ENCODE measurements at regions of chr12 and their contacts with region 1.

Region 1: DNA sequence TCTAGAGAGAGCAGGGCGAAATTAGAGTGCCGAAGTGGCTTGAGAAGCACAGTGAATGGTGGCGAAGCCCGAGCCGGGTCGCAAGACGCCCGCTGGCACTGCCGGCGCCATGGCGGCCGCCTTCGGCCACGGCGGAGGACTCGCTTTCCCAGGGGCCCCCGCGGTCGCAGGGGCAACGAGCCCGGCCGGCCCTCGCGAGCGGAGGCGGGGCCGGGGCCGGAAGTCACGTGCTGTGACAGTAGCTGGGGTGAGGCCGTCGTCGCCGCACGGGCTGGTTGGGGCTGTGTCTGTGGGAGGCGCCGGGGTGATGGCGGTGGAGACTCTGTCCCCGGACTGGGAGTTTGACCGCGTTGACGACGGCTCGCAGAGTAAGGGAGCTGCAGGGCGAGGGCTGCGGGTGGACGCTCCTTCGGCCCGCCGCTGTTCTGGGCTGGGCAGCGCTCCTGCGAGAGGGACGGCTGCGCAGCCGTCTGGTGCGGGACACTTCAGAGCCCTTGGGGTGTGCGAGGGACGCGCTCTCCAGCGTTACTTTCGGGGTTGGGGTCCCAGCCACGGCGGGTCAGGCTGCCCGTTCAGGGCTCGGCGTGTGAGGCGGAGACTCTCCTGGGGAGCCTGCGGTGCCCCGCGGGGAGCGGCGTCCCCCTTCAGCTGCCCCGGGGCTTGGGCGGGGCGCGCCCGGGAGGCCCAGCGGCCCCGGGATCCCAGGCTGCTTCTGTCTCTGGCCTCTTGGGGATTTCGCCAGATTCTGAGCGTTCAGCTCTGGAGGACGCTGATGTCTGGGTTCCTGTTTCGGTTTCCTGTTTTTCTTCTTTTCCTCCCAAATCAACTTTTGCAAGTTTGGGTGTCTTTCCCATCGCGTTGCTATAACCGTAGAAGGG is at the start of gene WASHC4:
- DNase-seq: peak; percentile 94
- H3K4me3 Mint-ChIP-seq: peak within 1 kb of the TSS; percentile 96
- H3K27ac Mint-ChIP-seq: peak within 1 kb of the TSS; percentile 92
- H3K4me1 Mint-ChIP-seq: peaks cover 33% of the 10 kb centered on the region
- H3K27me3 Mint-ChIP-seq: peaks cover 16% of the 10 kb centered on the region
- total RNA-seq, gene WASHC4: 38.4 and 41.3 TPM in 2 replicates

Region 2: DNA sequence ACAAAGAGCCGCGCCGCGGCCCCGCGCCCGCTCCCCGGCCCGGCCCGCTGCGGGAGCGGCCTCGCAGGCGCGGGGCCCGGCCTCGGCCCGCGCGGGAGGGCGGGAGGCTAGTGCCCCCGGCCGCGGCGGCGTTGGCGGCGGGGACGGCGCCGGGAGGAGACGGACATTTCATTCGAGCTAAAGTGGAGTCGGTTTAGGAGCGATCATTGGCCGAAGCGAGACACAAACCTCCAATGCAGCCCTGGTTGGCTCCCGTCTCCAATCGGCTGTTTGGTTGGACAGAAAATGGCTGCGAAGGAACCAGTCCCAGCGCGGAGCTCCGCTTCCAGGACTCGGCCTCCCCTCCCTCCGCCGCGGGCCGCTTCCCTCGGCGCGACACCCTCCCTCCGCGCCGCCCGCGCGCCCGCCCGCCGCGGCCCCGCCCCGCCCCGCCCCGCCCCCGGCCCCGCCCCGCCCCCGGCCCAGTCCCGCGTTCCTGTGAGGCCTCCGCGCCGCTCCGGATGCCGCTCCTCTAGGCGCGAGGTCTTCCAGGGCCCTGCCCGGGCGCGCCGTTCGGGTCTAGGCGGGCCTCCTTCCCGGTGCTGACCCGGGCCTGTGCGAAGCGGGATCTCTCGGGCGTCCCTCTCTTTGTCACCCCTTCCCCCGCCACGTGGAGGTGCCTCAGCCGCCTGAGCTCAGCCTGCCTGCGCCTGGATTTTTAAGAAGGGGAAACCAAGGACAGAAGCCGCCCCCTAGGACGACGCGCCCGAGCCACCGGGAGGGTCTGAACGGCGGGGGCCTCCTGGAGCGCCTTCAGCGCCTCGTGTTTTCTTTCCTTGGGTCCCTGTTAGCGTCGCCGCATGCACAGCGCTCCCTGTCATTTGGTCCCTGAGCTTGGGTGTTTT is 969.6 kb before region 1 on chr12 and contains the start of gene NFYB:
- intact Hi-C with region 1: loop called (anchors 2 kb)
- DNase-seq: peak; percentile 91
- H3K4me3 Mint-ChIP-seq: peak within 1 kb of the TSS; percentile 84
- H3K27ac Mint-ChIP-seq: peak within 1 kb of the TSS; percentile 86
- H3K4me1 Mint-ChIP-seq: peaks cover 17% of the 10 kb centered on the region
- H3K27me3 Mint-ChIP-seq: peaks cover 14% of the 10 kb centered on the region
- total RNA-seq, gene NFYB: 29.0 and 30.0 TPM in 2 replicates

Region 3: DNA sequence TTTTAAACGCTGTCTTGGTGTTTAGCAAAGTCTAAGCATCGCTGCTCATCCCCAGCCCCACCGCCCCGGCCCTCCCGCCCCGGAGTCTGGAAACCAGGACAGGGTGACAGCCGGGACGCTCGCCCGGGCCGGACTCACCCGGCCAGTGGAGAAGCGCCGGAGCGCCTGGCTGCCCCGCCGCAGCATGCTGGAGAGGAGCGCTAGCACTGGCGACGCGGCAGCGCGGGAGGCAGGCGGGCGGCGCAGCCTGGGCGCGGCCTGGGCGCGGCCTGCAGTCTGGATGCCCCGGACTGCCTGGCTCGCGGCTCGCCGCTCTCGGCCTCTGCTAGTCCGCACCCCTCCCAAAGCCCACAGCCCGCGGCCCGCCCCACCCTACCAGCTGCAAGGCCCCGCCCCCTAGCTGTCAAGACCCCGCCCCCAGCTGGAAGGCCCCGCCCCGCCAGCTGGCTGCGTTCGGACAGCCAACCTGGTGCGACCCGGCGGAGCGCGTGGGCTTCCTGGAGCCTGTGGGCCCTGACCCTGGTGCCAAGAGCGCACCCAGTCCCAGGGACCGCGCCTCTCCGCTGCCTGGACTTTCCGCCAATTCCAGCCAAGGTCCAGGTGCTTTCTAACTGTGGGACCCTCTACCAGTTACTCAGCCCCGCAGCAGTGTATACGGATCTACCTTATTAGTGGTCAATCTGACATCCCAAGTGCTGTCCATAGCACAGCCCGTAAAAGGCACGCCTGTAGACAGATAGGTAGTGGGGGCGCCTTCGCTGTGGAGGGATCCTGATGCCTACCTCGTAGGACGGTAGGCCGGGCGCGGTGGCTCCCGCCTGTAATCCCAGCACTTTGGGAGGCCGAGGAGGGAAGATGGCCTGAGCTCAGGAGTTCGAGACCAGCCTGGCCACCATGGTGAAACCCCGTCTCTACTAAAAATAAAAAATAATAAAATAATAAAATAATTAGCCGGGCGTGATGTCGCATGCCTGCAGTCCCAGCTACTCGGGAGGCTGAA is 23.2 kb before region 1 on chr12 and contains the start of gene ALDH1L2:
- intact Hi-C with region 1: loop called (anchors 1 kb)
- DNase-seq: peak; percentile 60
- H3K4me3 Mint-ChIP-seq: peak within 1 kb of the TSS; percentile 80
- H3K27ac Mint-ChIP-seq: peak within 1 kb of the TSS; percentile 44
- H3K4me1 Mint-ChIP-seq: peaks cover 8% of the 10 kb centered on the region
- H3K27me3 Mint-ChIP-seq: peaks cover 33% of the 10 kb centered on the region
- total RNA-seq, gene ALDH1L2: 1.0 and 1.4 TPM in 2 replicates

Region 4: GRCh38 chr12:105235732-105236476 is 128.2 kb after region 1 on chr12 and contains the start of gene APPL2:
- intact Hi-C with region 1: loop called (anchors 2 kb)
- DNase-seq: peak; percentile 69
- H3K4me3 Mint-ChIP-seq: peak within 1 kb of the TSS; percentile 88
- H3K27ac Mint-ChIP-seq: peak within 1 kb of the TSS; percentile 75
- H3K4me1 Mint-ChIP-seq: peaks cover 34% of the 10 kb centered on the region
- H3K27me3 Mint-ChIP-seq: no peaks in the 10 kb centered on the region
- total RNA-seq, gene APPL2: 28.8 and 30.4 TPM in 2 replicates

Region 5: DNA sequence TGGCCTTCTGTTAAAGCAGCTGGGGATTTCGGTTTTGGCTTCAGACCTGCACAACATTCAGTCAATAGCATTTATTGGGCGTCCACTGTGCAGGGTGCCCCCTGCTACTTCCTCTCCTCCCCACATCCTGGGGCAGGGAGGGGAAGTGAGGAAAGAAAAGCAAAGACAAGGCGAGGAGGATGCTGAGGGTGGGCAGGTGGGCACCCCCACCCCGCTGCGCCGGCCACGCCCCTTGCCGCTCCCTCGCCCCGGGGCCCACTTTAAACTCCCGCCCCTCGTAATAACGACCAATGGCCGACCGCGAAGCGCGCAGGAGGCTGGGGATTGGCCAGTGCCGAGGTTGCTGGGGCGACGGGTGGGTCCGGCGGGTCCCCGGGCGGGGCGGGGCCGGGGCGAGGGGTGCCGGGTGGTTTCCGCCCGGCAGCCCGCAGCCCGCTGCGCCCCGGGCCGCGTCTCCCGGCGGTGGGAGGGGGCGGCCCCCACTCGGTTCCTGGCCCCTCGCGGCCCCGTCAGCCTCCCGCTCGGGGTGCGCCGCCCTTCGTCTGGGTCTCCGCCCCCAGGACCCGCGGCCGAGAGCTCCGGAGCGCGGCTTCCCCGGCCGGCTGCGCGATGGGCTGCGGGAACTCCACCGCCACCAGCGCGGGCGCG is 222.7 kb after region 1 on chr12 and contains the start of gene C12orf75:
- intact Hi-C with region 1: loop called (anchors 5 kb)
- DNase-seq: peak; percentile 93
- H3K4me3 Mint-ChIP-seq: peak within 1 kb of the TSS; percentile 89
- H3K27ac Mint-ChIP-seq: peak within 1 kb of the TSS; percentile 97
- H3K4me1 Mint-ChIP-seq: peaks cover 66% of the 10 kb centered on the region
- H3K27me3 Mint-ChIP-seq: no peaks in the 10 kb centered on the region
- total RNA-seq, gene C12orf75: 246 and 252 TPM in 2 replicates

Measured in activated T-helper 2 cell treated with anti-CD3 and anti-CD28 coated beads, Interferon-gamma antibody, Interleukin-2, Interleukin-4, amounts not matched to agents 10 μg/mL and 5 μg/mL and 100 μg/mL, durations not matched to agents 14 hours and 24 hours and 36 hours (primary cell).